Posterior cingulate gyrus (tissue), 11 donors: ENCODE measurements at regions of chr1 and their contacts with region 1.

Region 1: GRCh38 chr1:84573967-84574842 is at the start of gene CTBS:
- DNase-seq: peak; percentile 65 to 97 (median 82)

Region 2: DNA sequence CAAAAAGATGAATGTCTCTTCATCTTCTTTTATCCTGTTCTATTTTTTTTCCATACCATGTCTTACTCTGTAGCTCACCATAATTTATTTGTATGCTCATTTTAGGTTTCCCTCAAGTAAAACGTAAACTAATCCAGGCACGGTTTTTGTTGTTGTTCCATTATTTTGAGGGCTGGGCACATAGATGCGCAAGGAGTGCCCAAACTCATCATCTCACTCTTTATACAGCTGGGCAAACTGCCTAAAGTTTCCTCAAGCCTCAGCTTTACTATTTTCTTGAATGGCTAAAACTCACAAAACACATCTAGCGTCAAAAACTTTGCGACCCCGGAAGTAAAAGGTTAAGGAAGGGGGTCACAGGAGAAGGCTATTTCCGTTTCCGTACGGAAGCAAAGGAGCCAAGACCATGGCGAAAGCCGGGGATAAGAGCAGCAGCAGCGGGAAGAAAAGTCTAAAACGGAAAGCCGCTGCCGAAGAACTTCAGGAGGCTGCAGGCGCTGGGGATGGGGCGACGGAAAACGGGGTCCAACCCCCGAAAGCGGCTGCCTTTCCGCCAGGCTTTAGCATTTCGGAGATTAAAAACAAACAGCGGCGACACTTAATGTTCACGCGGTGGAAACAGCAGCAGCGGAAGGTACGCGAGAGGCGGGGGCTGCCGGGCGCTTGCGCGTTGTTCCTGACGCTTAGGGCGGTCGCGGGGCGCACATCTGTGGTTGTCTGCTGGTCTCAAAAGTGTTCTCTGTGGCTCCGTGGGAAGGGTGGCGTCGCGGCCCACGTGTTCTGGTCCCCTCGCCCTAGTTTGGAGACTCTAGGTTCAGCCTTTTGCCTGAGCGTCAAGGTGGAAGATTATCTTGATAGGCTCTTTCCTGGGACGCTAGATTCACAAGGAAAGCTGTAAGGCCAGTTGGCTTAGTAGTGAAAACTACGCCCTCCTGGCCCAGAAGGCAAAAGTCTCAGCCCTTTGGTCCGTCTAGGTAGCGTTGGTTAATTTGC is 95.0 kb before region 1 on chr1 and contains the start of gene RPF1:
- intact Hi-C with region 1: loop called (anchors 1 kb)
- DNase-seq: peak; percentile 56 to 97 (median 76)

Region 3: DNA sequence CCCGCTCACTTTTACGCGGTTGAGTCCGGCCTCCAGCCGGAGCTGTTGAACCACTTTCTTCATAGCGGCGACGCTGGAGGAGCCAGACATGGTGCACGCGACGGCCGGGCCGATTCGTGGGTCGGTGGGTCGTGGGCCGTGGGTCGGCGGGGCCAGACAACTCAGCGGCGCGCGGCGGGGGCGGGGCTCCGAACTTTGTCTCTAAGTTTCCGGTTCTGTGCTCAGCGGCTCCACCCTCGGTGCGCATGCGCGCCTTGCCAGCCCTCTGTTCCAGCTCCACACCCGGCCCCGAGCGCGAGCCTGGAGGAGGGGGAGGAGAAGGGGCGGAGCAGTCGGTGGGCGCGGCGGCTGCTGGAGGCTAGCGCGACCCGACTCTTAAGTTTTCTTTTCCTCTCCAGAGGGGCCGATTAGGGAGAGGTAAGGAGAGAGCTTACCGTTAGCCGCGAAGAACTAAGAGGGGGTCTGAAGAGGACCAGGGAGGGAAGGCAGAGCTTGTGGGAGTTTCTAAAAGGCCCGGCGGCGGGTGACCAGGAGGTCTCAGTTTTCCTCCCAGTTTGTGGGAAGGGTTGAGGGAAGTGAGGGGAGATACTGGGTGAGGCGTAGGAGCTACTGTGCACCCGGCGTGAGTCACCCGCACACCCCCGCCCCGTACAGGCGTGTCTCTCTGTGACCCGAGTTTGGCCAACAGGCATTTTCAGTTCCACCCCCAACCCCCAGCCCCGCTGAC is 68.0 kb before region 1 on chr1 and contains the starts of genes GNG5 and SPATA1:
- intact Hi-C with region 1: loop called (anchors 2 kb)
- DNase-seq: peak; percentile 92 to 99 (median 94)